Activated B cell treated with CpG ODN at 0.5 μM for 24 hours (primary cell): ENCODE measurements at regions of chr6 and their contacts with region 1.

Region 1: DNA sequence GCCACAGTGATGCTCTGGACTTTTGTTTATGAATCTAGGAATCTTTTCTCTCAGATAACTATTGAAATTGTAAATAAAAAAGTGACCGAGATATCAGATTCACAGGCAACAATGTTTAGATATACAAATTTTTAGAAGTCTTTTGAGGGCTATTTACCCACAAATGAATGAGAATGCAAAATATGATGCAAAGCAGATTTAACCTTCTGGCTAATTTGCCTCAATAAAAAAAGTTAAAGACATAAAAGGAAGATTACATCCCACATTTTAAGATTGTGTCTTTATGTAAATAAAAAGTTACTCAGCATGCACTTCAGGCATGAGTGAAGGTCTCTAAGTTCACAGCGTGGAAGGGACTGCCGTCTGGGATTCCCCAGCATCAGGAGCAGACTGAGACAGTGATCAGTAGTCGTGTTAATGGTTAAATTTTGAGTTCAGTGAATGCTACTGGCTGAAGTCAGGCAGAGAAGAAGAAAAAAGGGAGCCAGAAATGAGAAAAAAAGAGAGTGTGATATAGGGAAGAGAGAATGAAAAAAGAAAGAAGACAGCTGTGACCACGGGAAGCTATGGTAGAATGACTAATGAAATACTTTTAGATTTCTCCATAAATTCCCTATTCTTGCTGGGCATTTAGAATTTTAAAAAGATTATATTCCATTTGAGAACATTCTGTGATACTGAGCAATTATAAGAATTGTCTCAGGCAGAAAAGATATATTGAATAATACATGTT is 93.6 kb downstream of the MYB start:
- DNase-seq: no peak
- ATAC-seq: no peak
- H3K4me3 Mint-ChIP-seq: peak overlapping the region; percentile 2
- H3K27ac Mint-ChIP-seq: no peak overlapping the region
- H3K4me1 Mint-ChIP-seq: peaks cover 7% of the 10 kb centered on the region
- H3K27me3 Mint-ChIP-seq: no peaks in the 10 kb centered on the region
- CTCF ChIP-seq: no peak

Region 2: GRCh38 chr6:135323202-135323668 is 48.5 kb after region 1 on chr6:
- CTCF ChIA-PET with region 1: no interaction called
- POLR2A ChIA-PET with region 1: no interaction called
- intact Hi-C with region 1: loop called (anchors 2 kb)
- DNase-seq: no peak
- ATAC-seq: peak; percentile 92
- H3K4me3 Mint-ChIP-seq: peak overlapping the region; percentile 60
- H3K27ac Mint-ChIP-seq: no peak overlapping the region
- H3K4me1 Mint-ChIP-seq: peaks cover 13% of the 10 kb centered on the region
- H3K27me3 Mint-ChIP-seq: no peaks in the 10 kb centered on the region
- CTCF ChIP-seq: no peak